Esophagus muscularis mucosa (tissue), 4 donors: ENCODE measurements at regions of chr6 and their contacts with region 1.

Region 1: DNA sequence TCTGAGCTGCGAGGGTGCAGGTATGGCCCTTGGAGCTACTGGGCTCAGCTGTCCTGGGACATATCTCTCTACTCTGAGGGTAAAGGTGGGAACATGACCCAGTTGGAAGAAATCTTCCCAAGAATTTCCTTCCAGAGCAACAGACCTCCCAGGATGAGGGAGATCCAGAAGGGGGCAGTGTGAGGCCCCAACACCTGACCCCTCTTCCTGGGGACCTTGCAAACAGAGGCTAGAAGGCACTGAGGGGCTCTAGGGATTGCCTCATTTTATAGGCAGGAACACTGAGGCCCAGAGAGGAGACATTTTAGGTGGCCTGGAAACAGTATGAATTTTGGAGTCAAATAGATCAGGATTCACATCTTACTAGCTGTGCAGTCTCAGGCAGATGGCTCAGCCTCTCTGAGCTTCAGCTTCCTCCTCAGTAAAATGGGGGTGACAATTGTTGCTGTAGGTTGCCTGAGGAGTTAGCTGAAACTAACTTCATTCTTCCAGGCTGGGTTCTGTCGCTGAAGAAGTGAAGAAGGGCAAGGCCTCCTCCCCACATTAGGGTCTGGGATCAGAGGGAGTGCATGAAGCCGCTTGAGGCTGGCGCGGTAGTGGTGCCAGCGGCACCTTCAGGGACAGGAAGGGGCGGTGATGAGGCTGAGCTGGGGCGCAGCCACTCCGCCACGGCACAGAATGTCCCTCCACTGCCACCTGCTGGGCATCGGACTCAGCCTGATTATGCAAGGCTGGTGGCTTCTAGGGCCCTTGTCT is 11.4 kb downstream of the KCNK17 start:
- DNase-seq: no peak
- H3K4me3 ChIP-seq: peak overlapping the region in 1 of 4 donors; percentile 35
- H3K27ac ChIP-seq: no peak overlapping the region
- H3K4me1 ChIP-seq: peaks cover 2 to 9% (median 4%) of the 10 kb centered on the region in 4 donors
- H3K27me3 ChIP-seq: peaks cover 0 to 30% (median 0%) of the 10 kb centered on the region in 4 donors
- CTCF ChIP-seq: peak; percentile 68 to 87 (median 84)
- EP300 ChIP-seq: no peak
- POLR2A ChIP-seq: no peak

Region 2: GRCh38 chr6:39088331-39088730 is 214.5 kb before region 1 on chr6:
- intact Hi-C with region 1: loop called (anchors 5 kb)
- DNase-seq: peak; percentile 91
- H3K4me3 ChIP-seq: no peak overlapping the region
- H3K27ac ChIP-seq: no peak overlapping the region
- H3K4me1 ChIP-seq: peaks cover 10 to 19% (median 13%) of the 10 kb centered on the region in 4 donors
- H3K27me3 ChIP-seq: peaks cover 0 to 12% (median 0%) of the 10 kb centered on the region in 4 donors
- CTCF ChIP-seq: peak; percentile 46 to 54 (median 52)
- EP300 ChIP-seq: no peak
- POLR2A ChIP-seq: no peak

Region 3: DNA sequence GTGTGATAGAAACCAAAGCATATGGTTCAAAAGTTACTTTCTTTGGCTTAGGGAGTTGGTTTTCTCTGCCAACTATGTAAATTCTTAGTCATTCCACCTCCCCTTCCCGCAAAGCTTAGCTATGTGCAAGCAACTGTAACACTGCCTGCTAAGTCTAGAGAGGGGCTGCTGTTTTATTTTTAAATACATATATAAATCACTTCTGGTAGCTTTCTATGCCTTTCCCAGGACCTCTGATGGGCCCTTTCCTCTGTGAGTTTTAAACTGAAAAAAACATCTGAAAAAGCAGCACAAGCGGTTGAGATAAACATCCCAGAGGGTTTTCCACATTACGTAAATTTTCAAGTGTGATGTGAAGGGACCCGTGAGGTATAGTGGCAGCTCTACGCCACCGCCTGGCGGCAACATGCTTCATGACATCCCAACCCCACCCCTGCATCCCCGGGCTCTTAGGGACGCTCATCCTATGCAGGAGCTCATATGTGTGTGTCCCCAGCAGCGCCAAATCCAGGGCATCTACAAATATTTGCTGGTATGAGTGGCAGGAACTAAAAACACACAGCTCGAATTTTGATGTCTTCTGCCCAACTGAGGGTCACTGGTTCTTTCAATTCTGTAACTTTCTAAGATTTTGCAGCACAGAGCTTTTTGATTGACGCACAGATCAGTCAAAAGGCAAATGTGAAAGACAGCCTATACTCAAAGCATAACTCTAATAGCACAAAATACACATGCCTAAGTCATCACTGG is 200.6 kb before region 1 on chr6:
- intact Hi-C with region 1: no loop called
- DNase-seq: peak; percentile 57
- H3K4me3 ChIP-seq: no peak overlapping the region
- H3K27ac ChIP-seq: peak overlapping the region in 2 of 4 donors; percentile 5 to 46
- H3K4me1 ChIP-seq: peaks cover 0 to 14% (median 12%) of the 10 kb centered on the region in 4 donors
- H3K27me3 ChIP-seq: no peaks in the 10 kb centered on the region
- CTCF ChIP-seq: peak; percentile 43 to 52 (median 50)
- EP300 ChIP-seq: no peak
- POLR2A ChIP-seq: no peak

Region 4: DNA sequence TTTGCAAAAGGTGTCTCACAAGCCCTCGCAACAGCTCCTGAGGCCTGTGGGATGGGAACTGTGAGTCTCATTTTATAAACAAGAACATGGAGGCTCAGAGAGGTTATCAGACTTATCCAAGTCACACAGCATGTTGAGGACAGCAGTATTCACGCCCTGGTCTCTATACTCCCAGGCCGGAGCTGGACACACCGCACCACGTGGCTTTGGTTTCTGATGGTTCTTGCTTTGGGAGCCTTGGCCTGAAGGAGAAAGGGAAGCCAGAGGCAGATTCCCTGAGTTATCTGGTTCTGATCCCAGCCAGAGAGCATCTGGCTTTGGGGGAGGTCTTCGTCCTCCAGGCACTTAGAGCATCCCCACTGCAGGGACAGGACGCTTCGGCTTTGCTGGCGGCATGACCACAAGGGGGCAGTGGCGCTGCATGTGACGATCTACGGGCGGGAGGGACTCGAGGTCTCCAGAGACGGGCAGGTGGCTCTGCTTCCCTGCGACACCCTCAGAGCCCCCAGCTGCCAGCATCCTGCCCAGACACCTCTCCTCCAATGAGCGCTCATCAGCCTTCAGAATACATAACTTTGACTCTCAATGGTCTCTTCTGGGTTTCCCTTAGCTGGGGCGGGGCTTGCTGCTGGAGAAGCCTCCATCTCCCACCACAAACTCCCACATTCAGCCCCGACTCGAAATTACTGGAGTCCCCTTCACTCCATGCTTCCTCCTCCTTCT is 136.5 kb before region 1 on chr6:
- intact Hi-C with region 1: loop called (anchors 5 kb)
- DNase-seq: no peak
- H3K4me3 ChIP-seq: no peak overlapping the region
- H3K27ac ChIP-seq: no peak overlapping the region
- H3K4me1 ChIP-seq: peaks cover 0 to 7% (median 5%) of the 10 kb centered on the region in 4 donors
- H3K27me3 ChIP-seq: peaks cover 0 to 40% (median 0%) of the 10 kb centered on the region in 4 donors
- CTCF ChIP-seq: peak; percentile 70 to 76 (median 72)
- EP300 ChIP-seq: no peak
- POLR2A ChIP-seq: no peak